Panc1 (cell line): ENCODE measurements at regions of chr12 and their contacts with region 1.

Region 1: DNA sequence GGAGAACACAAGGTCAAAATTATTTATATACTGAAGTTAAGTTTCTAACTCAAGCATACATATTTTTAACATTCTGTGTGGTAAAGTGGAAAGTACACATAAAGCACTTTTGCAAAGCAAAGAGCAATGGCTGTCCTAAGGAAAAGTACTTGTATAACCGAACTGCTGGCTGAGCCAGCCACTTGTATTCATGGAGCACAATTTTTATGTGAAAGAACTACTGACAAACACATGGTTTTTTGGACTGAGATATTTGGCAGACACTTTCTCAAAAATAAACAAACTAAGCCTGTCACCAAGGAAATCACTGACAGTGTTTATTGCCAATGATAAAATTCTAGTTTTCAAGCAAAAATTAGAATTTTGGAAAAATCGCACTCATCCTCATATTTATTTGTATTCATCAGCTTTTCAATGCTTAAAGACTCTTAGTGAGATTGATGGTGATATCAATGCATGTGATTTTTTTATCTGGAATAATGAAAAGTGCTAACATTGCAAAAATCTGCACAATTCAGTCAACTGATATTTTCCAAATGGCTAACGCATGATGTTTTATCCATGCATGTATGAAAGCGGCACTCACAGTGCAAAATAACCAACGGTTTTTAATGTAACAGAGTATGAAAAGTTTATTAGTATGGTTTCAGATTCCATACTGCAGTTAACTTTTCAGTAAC is 125.3 kb downstream of the IPO8 start:
- DNase-seq: no peak
- ATAC-seq: no peak
- H3K4me3 ChIP-seq: no peak overlapping the region
- H3K27ac ChIP-seq: no peak overlapping the region
- H3K4me1 ChIP-seq: no peaks in the 10 kb centered on the region
- H3K27me3 ChIP-seq: no peaks in the 10 kb centered on the region
- CTCF ChIP-seq: no peak

Region 2: GRCh38 chr12:30439686-30440085 is 130.7 kb before region 1 on chr12:
- CTCF ChIA-PET with region 1: interaction called, 11 read pairs
- POLR2A ChIA-PET with region 1: no interaction called
- in situ Hi-C with region 1: no loop called
- intact Hi-C with region 1: no loop called
- DNase-seq: no peak
- ATAC-seq: no peak
- H3K4me3 ChIP-seq: no peak overlapping the region
- H3K27ac ChIP-seq: no peak overlapping the region
- H3K4me1 ChIP-seq: no peaks in the 10 kb centered on the region
- H3K27me3 ChIP-seq: 0 out of 2 replicates have a peak, but pooled peaks cover 7% of the 10 kb centered on the region
- CTCF ChIP-seq: no peak